Dorsolateral prefrontal cortex (tissue), 120 donors: ENCODE measurements at regions of chr13 and their contacts with region 1.

Region 1: DNA sequence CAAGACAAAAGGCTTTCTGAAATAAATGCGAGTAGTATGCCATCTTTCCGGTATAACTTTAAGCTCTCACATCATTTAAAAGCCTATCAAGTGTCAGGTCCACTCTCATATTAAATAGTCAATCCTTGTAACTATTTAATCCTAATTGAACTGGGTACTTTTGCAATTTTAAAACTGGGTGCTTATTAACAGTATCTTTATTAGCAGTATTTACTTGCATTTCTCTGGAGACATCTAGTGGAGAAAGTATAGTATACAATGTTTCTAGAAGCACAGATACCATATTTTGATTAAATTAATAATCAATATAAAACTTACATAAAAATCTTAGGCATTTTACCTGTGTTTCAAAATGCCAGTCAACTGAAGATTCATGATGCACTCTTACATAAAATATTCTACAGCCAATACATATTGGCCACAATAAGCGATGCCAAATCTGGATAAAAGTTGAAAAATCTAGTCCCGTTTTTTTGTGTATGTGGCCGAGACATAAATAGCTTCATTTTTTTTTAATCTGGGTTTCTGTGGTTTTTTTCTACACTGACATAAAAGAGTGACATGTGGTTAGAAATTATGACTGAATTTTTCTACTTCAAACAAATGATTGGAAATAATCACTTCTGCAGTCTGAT is 4.3 kb upstream of the POSTN start:
- DNase-seq: no peak
- H3K4me3 ChIP-seq: peak overlapping the region in 6 of 59 donors; percentile 12 to 30 (median 20)
- H3K27ac ChIP-seq: no peak overlapping the region
- H3K27me3 ChIP-seq: peaks cover 0 to 4% (median 0%) of the 10 kb centered on the region in 45 donors
- CTCF ChIP-seq: peak; percentile 32 to 89 (median 69)

Region 2: DNA sequence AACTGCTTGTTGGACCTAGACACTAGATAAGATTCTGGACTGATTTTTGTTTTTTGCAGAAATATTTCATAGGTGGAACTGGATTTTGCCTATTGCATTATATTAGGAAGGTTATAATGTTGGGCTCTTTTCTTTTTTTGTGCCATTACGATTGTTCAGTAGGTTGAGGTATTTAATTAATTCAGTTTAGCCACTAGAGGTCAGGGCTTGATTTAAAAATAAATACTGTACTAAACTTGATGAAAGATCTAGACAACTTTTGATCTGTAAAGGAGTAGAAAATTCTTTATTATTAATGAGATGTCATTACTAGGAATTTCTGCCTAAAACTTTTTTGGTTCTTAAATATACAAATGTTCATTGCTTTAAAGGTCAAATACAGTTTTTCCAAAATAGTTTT is 528.2 kb before region 1 on chr13:
- intact Hi-C with region 1: loop called in 1 of 2 experiments (anchors 2 kb)
- DNase-seq: no peak
- H3K4me3 ChIP-seq: no peak overlapping the region
- H3K27ac ChIP-seq: no peak overlapping the region
- H3K27me3 ChIP-seq: no peaks in the 10 kb centered on the region
- CTCF ChIP-seq: peak in 55 of 56 donors; percentile 19 to 69 (median 48)

Region 3: GRCh38 chr13:37736045-37736444 is 133.2 kb after region 1 on chr13:
- intact Hi-C with region 1: no loop called
- DNase-seq: no peak
- H3K4me3 ChIP-seq: no peak overlapping the region
- H3K27ac ChIP-seq: no peak overlapping the region
- H3K27me3 ChIP-seq: no peaks in the 10 kb centered on the region
- CTCF ChIP-seq: no peak